Activated naive CD4-positive, alpha-beta T cell treated with anti-CD3 and anti-CD28 coated beads for 36 hours (primary cell): ENCODE measurements at regions of chr6 and their contacts with region 1.

Region 1: GRCh38 chr6:72622094-72622940 is 453 bp downstream of the KCNQ5 start:
- DNase-seq: peak; percentile 57
- H3K4me3 Mint-ChIP-seq: peak overlapping the region; percentile 96
- H3K27ac Mint-ChIP-seq: peak overlapping the region; percentile 98
- H3K4me1 Mint-ChIP-seq: peaks cover 66% of the 10 kb centered on the region
- H3K27me3 Mint-ChIP-seq: no peaks in the 10 kb centered on the region

Region 2: DNA sequence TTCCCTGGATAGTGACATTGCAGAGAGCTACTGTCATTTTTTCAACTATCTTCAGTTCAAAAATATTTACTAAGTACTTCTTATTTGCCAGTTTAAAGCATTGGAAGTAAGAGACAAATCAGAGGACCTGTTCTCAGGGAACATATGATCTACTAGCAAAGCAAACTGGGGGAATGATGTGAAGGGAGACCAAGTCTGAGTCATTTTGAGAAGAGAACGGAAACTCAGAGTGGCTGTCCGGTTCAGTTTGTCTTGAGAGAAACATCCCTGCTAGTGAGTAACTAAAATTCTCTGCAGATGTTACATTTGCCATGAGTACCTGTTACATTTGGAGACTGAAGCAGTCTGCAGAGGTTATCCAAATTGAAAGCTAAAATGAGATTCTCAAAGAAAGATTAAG is 117.8 kb after region 1 on chr6:
- CTCF ChIA-PET with region 1: no interaction called
- intact Hi-C with region 1: loop called (anchors 1 kb)
- DNase-seq: peak; percentile 22
- H3K4me3 Mint-ChIP-seq: no peak overlapping the region
- H3K27ac Mint-ChIP-seq: peak overlapping the region; percentile 4
- H3K4me1 Mint-ChIP-seq: peaks cover 30% of the 10 kb centered on the region
- H3K27me3 Mint-ChIP-seq: no peaks in the 10 kb centered on the region

Region 3: DNA sequence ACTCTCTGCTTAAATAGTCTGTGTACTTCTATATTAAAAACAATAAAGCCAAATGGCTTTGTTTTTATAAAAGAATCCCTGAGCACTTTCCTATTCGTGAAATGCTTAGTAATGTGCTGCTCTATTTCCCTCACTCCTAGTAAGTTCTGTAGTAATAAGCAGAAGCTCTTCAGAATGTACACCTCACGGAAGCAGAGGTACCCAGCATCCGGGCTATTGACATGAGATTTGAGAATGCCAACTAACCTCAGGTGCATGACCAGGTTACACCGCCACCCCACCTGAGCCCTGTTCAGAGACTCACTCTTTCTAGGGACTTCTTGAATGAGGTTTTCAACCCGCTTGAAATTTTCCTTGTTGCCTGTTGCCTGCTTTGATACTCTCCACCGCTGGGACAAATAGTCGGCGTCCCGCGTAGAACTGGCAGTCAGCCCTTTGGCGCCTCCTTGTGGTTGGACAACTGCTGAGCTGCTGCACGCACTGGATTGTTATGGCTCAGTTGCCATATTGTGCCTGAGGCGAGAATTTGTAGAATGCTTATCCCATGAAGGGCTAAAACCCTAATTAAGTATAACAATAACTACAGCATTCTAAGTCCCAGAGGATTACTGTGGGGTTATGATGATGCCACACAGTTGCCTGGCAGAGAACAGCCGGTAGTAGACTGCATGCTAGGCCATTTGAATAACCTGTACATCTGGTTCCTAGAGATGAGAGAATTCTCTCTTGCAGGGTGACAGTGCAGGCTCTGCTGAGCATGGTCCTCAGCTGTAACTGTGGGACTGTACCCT is 507.5 kb after region 1 on chr6:
- CTCF ChIA-PET with region 1: interaction called, 138 read pairs
- intact Hi-C with region 1: loop called (anchors 1 kb)
- DNase-seq: peak; percentile 94
- H3K4me3 Mint-ChIP-seq: peak overlapping the region; percentile 36
- H3K27ac Mint-ChIP-seq: no peak overlapping the region
- H3K4me1 Mint-ChIP-seq: peaks cover 4% of the 10 kb centered on the region
- H3K27me3 Mint-ChIP-seq: no peaks in the 10 kb centered on the region

Region 4: DNA sequence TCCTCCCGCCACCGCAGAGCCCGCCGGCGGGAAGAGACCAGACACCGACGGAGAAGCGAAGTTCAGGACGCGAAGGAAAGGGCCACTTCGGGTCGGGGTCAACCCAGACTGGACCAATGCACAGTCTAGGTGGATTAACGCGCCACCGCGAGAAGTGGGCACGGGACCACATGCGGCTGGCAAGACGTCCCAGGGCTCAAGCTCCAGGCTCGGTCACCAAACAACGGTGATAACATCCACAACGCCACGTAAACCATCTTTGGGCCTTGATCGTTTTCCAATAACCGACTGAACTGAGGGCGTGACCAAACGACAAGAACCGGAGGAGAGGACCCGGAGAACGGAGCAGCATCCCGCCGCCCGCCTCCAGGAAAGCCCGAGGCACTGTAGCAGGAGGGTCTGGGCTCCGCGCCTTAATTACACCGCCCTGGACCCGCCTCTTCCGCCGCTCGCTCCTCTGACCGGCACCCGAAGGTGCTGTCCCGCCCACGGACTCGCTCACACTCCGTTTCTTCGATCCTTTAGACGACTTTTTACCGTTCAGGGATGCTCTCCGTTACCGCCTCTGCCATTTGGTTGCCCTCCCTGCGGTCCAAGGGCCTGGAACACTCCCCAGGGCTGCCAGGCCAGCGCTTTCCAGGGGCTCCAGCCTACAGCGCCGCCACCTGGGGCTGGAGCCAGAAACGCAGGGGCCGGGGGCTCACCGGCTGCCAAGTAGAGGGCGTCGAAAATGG is 687.6 kb after region 1 on chr6:
- CTCF ChIA-PET with region 1: no interaction called
- intact Hi-C with region 1: loop called (anchors 1 kb)
- DNase-seq: peak; percentile 63
- H3K4me3 Mint-ChIP-seq: peak overlapping the region; percentile 83
- H3K27ac Mint-ChIP-seq: no peak overlapping the region
- H3K4me1 Mint-ChIP-seq: peaks cover 19% of the 10 kb centered on the region
- H3K27me3 Mint-ChIP-seq: peaks cover 53% of the 10 kb centered on the region

Region 5: DNA sequence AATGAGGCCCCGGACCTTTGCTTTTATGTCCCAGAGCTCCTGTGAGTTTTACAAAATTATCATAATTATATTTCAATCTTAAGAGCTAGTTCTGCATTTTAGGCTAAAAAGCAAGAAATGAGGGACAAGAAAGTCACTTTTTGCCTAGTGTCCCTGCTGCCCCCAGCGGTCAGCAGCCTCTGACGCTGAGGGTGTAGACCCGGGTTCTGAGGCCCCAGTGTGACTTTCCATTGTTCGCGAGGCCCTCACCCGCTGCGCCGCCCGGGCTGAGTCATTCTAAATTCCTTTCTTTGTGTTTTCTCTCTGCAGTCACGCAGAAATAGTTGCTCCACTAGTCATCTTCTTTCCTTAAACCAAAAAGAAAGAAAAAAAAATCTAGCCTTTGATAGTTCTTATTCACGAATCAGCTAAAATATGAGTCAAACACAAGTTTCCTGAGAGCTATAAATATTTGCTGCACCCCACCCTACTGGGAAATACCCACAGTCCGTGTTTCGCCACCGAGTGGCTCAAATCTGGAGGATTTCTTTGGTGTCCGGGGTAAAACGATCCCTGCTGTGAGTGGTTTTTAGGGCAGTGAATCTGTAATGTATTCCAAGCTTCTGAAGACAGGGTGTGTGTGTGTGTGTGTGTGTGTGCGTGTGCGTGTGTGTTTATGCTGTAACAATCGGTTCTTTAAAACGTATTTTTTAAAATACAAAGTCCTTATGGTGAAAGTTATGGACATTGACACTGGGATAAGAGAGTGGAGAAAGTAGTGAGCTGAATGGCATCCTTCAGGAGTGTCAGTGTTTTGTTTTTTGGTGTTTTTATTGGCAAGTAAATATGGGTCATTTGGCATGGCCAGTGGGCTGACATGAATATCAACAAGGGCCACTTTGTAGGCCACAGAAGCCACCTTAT is 958.2 kb after region 1 on chr6:
- CTCF ChIA-PET with region 1: no interaction called
- intact Hi-C with region 1: loop called (anchors 1 kb)
- DNase-seq: peak; percentile 90
- H3K4me3 Mint-ChIP-seq: peak overlapping the region; percentile 76
- H3K27ac Mint-ChIP-seq: peak overlapping the region; percentile 99
- H3K4me1 Mint-ChIP-seq: peaks cover 28% of the 10 kb centered on the region
- H3K27me3 Mint-ChIP-seq: no peaks in the 10 kb centered on the region

Region 6: GRCh38 chr6:73722318-73723060 is 1100.2 kb after region 1 on chr6:
- CTCF ChIA-PET with region 1: no interaction called
- intact Hi-C with region 1: loop called (anchors 10 kb)
- DNase-seq: peak; percentile 55
- H3K4me3 Mint-ChIP-seq: no peak overlapping the region
- H3K27ac Mint-ChIP-seq: peak overlapping the region; percentile 15
- H3K4me1 Mint-ChIP-seq: peaks cover 27% of the 10 kb centered on the region
- H3K27me3 Mint-ChIP-seq: no peaks in the 10 kb centered on the region